Heart left ventricle (tissue), 16 donors: ENCODE measurements at regions of chr7 and their contacts with region 1.

Region 1: DNA sequence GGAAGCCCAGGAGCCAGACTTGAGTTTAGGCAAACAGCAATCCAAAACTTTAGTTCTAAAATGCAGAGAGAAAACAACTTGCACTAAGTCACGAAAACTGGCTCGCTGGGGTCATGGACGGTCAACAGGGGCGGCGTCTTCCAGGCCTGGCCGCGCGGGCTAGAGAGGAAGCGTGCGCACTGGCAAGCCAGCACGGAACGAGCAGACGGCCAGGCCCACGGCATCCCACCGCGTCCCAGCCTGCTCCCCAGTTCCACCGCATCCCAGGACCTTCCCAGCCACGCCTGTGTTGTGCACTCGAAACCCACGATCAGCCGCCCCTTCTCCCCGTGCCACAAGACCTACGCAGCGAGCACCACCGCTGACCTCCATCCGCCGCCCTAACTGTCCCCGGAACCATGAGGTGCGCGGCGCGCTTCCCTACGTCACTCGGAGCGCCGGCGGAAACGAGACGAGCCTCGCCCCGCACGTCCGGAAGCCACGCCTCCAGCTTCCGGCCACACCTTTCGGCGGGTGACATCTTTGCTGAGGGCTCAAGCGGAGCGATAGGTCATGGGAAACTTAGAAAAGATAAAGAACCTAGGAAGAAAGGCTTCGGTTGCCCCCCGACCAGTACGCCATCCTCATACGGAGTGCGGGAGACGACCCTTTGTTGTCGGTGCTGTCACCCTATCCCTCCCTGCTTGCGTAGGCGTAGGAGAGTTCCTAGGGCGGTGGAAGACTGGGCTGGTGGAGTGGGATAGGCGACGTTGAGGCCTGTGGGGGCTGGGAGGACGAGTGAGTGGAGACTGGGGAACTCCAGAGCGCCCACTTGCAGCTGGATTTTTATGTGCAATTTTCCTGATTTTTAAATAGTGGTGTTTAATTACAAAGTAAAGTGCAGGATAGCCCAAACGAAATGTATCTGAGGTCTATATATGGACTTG is at the start of gene TBRG4:
- DNase-seq: peak; percentile 93 to 97 (median 96)
- ATAC-seq: peak; percentile 99
- H3K4me3 ChIP-seq: peak within 1 kb of the TSS; percentile 51 to 92 (median 78)
- H3K27ac ChIP-seq: peak within 1 kb of the TSS; percentile 86 to 98 (median 94)
- H3K4me1 ChIP-seq: peaks cover 5 to 49% (median 38%) of the 10 kb centered on the region in 12 donors
- H3K27me3 ChIP-seq: no peaks in the 10 kb centered on the region
- CTCF ChIP-seq: peak in 11 of 12 donors; percentile 16 to 63 (median 40)
- POLR2A ChIP-seq: peak in 1 of 2 donors; percentile 81
- total RNA-seq, gene TBRG4: 58.0 to 96.1 (median 61.5) TPM

Region 2: GRCh38 chr7:44408596-44408995 is 703.0 kb before region 1 on chr7:
- intact Hi-C with region 1: no loop called
- DNase-seq: no peak
- ATAC-seq: peak in 3 of 4 donors; percentile 55 to 71 (median 62)
- H3K4me3 ChIP-seq: no peak overlapping the region
- H3K27ac ChIP-seq: peak overlapping the region in 2 of 12 donors; percentile 9 to 33
- H3K4me1 ChIP-seq: peaks cover 0 to 25% (median 8%) of the 10 kb centered on the region in 12 donors
- H3K27me3 ChIP-seq: no peaks in the 10 kb centered on the region
- CTCF ChIP-seq: no peak
- POLR2A ChIP-seq: no peak

Region 3: DNA sequence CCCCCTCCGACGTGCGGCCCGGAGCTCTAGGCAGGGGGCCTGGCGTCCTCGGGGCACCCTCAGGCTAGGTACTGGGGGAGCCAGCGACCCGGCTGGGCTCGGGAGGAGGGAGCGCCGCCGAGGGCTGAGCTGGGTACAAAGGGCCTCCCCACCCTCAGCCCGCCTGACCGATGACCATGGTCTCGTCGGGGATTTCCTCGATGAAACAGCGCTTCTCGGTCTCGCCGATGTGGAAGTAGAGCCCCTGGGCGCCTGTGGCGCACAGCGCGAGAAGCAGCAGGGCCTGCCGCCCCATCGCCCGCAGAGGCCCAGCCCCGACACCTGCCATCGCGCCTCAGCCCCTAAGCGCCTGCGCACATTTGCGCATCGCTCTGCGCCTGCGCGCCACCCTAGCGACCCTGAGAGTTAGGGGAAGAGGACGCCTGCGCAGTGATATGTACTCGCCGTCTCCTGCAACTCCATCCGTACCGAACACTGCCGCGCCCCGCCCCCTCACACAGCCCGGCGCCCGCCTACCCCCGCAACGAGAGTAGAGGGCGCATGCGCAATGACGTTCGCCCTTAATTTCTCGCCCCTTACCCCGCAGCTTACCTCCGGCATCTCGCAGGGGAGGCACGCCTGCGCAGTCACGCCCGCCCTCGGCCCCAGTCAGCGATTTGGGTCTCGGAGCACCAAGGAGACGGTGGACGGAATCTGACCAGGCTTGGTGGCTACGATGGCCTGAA is 529.5 kb before region 1 on chr7 and contains the start of gene TMED4:
- intact Hi-C with region 1: loop called in 3 of 10 experiments (anchors 2 to 10 kb)
- DNase-seq: peak; percentile 100
- ATAC-seq: peak; percentile 98 to 99 (median 98)
- H3K4me3 ChIP-seq: peak within 1 kb of the TSS; percentile 64 to 98 (median 82)
- H3K27ac ChIP-seq: peak within 1 kb of the TSS; percentile 92 to 99 (median 98)
- H3K4me1 ChIP-seq: peaks cover 5 to 29% (median 22%) of the 10 kb centered on the region in 12 donors
- H3K27me3 ChIP-seq: no peaks in the 10 kb centered on the region
- CTCF ChIP-seq: peak in 1 of 12 donors; percentile 11
- POLR2A ChIP-seq: peak in 1 of 2 donors; percentile 80
- total RNA-seq, gene TMED4: 55.4 to 129 (median 68.9) TPM

Region 4: GRCh38 chr7:44847508-44847920 is 264.0 kb before region 1 on chr7:
- intact Hi-C with region 1: no loop called
- DNase-seq: peak; percentile 89 to 95 (median 89)
- ATAC-seq: peak; percentile 23 to 87 (median 75)
- H3K4me3 ChIP-seq: peak overlapping the region; percentile 52 to 85 (median 70)
- H3K27ac ChIP-seq: peak overlapping the region; percentile 70 to 99 (median 97)
- H3K4me1 ChIP-seq: peaks cover 0 to 46% (median 38%) of the 10 kb centered on the region in 12 donors
- H3K27me3 ChIP-seq: no peaks in the 10 kb centered on the region
- CTCF ChIP-seq: peak; percentile 80 to 99 (median 94)
- POLR2A ChIP-seq: no peak

Region 5: DNA sequence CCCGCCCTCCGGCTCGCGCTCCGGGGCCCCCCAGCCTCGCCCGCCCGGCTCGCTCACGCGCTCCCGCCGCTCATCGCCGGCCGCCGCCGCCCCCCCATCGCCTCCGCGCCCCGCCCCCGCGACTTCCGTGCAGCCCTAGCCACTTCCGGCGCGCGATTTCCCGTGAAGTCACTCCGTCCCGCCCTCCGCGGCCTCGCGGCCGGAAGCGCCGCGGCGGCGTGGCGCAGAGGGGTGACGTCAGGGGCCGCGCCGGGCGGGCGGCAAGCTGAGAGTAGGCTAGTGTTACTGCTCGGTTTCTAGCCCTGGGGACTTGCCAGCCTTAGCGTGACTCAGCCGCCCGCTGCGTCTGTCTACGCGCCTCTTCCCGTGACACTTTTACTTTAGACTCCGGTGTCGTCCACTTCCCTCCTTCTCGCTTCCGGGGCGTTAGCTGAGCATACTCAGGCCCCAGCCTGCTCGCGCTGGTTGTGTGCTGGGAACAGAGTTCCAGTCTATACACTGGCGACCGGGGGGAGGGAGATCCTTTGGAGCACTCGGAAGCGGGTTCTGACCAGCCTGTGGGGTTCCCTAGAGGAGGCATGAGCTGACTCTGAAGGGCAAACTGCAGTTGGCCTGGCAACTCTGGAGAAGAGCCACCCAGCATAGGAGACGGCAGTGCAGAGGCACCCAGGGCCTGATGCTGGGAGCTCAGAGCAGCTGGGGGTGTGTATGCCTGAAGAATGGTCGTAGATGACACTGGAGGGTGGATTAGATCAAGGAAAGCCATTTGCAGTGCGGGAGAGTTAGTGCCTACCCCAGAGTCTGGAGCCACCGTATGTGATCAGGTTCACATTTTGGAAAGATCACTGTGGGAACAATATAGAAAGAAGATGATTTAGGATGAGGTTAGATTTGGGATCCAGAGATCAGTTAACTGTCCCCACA is 225.9 kb before region 1 on chr7 and contains the start of gene PURB:
- intact Hi-C with region 1: loop called in 2 of 10 experiments (anchors 5 to 10 kb)
- DNase-seq: peak; percentile 94 to 98 (median 96)
- ATAC-seq: peak; percentile 97 to 98 (median 98)
- H3K4me3 ChIP-seq: peak within 1 kb of the TSS; percentile 68 to 99 (median 90)
- H3K27ac ChIP-seq: peak within 1 kb of the TSS; percentile 81 to 99 (median 98)
- H3K4me1 ChIP-seq: peaks cover 5 to 51% (median 42%) of the 10 kb centered on the region in 12 donors
- H3K27me3 ChIP-seq: no peaks in the 10 kb centered on the region
- CTCF ChIP-seq: no peak
- POLR2A ChIP-seq: peak; percentile 87 to 94
- total RNA-seq, gene PURB: 9.8 to 19.4 (median 15.8) TPM

Region 6: GRCh38 chr7:44986218-44987053 is 125.1 kb before region 1 on chr7:
- intact Hi-C with region 1: loop called in 4 of 10 experiments (anchors 1 to 5 kb)
- DNase-seq: peak; percentile 94 to 98 (median 97)
- ATAC-seq: peak; percentile 98 to 99 (median 98)
- H3K4me3 ChIP-seq: peak overlapping the region; percentile 18 to 74 (median 62)
- H3K27ac ChIP-seq: peak overlapping the region; percentile 89 to 98 (median 96)
- H3K4me1 ChIP-seq: peaks cover 0 to 54% (median 24%) of the 10 kb centered on the region in 12 donors
- H3K27me3 ChIP-seq: no peaks in the 10 kb centered on the region
- CTCF ChIP-seq: no peak
- POLR2A ChIP-seq: peak; percentile 39 to 96

Region 7: GRCh38 chr7:45292481-45292880 is 180.9 kb after region 1 on chr7:
- intact Hi-C with region 1: no loop called
- DNase-seq: peak in 4 of 5 donors; percentile 30 to 41 (median 40)
- ATAC-seq: peak; percentile 50 to 77 (median 72)
- H3K4me3 ChIP-seq: no peak overlapping the region
- H3K27ac ChIP-seq: peak overlapping the region in 5 of 12 donors; percentile 22 to 70 (median 61)
- H3K4me1 ChIP-seq: peaks cover 0 to 35% (median 11%) of the 10 kb centered on the region in 12 donors
- H3K27me3 ChIP-seq: no peaks in the 10 kb centered on the region
- CTCF ChIP-seq: no peak
- POLR2A ChIP-seq: no peak